ENCODE measurements at regions of chr17 and their contacts with region 1.

Region 1: GRCh38 chr17:72510397-72511016 is 389.7 kb downstream of the SOX9 start:
- DNase-seq: peak; percentile 92
- ATAC-seq: peak; percentile 80
- H3K4me3 ChIP-seq: no peak overlapping the region
- H3K27ac ChIP-seq: no peak overlapping the region
- H3K4me1 ChIP-seq: peaks cover 15% of the 10 kb centered on the region
- H3K27me3 ChIP-seq: no peaks in the 10 kb centered on the region
- CTCF ChIP-seq: no peak
- EP300 ChIP-seq: peak in 1 of 2 experiments; percentile 69; a peak in 1 of 4 replicates
- POLR2A ChIP-seq: no peak
- RAD21 ChIP-seq: no peak

Region 2: DNA sequence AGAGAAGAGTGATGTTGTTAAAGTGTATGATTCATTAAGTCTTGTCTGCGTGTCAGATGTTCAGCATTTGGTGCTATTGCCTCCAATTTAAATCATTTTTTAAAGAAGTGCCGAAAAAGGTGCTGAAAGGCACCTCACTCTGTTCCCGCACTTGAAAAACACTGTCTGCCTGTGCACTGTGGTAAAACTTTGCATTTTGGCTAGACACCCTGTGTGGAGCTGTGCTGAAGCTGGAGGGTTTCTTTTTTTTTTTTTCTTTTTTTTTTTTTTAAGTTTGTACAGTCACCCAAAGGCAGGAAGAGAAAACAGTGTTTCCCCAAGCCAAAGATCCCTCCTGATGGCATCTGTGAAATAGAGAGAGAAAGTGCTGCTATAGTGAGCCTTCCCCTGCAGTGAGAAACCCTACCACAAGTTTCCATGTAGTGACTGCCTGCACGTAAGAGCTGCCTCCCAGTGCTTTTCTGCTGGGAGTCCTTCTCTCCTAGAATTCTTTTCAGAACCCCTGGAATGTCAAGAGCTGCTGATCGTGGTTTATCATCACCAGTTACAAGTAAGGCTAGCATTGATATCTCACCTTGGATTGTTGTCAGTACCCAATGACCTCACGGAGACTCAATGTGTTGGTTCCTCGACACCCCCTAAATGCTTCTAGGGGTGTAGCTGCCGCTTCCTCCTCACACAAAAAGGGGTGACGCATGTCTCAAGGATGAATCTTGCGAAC is 505.7 kb before region 1 on chr17:
- CTCF ChIA-PET with region 1: no interaction called
- POLR2A ChIA-PET with region 1: interaction called, 4 read pairs
- RAD21 ChIA-PET with region 1: interaction called, 4 read pairs
- SMC1A ChIA-PET with region 1: interaction called, 3 read pairs
- in situ Hi-C with region 1: no loop called
- intact Hi-C with region 1: loop called (anchors 5 kb)
- DNase-seq: peak; percentile 79
- ATAC-seq: peak; percentile 77
- H3K4me3 ChIP-seq: peak overlapping the region; percentile 35
- H3K27ac ChIP-seq: peak overlapping the region; percentile 87
- H3K4me1 ChIP-seq: peaks cover 7% of the 10 kb centered on the region; the same call in 1 of the 2 replicates
- H3K27me3 ChIP-seq: no peaks in the 10 kb centered on the region
- CTCF ChIP-seq: no peak
- EP300 ChIP-seq: peak in 1 of 2 experiments; percentile 11; a peak in 2 of 4 replicates
- POLR2A ChIP-seq: no peak
- RAD21 ChIP-seq: peak; percentile 10; the same call in 1 of the 2 replicates

Region 3: GRCh38 chr17:72030067-72030899 is 480.2 kb before region 1 on chr17:
- CTCF ChIA-PET with region 1: interaction called, 3 read pairs
- POLR2A ChIA-PET with region 1: no interaction called
- RAD21 ChIA-PET with region 1: interaction called, 6 read pairs
- SMC1A ChIA-PET with region 1: interaction called, 6 read pairs
- in situ Hi-C with region 1: loop called (anchors 5 kb)
- intact Hi-C with region 1: loop called (anchors 2 kb)
- DNase-seq: peak; percentile 71
- ATAC-seq: peak; percentile 81
- H3K4me3 ChIP-seq: peak overlapping the region; percentile 80
- H3K27ac ChIP-seq: peak overlapping the region; percentile 91
- H3K4me1 ChIP-seq: peaks cover 45% of the 10 kb centered on the region
- H3K27me3 ChIP-seq: no peaks in the 10 kb centered on the region
- CTCF ChIP-seq: peak; percentile 30 to 48 (median 40); a peak in 4 of 6 replicates
- EP300 ChIP-seq: 0 out of 4 replicates have a peak, but pooled peaks of 1 of the 2 experiments have one; percentile 4
- POLR2A ChIP-seq: peak; percentile 65
- RAD21 ChIP-seq: peak; percentile 25; the same call in 1 of the 2 replicates

Region 4: GRCh38 chr17:72388765-72389473 is 121.6 kb before region 1 on chr17:
- CTCF ChIA-PET with region 1: interaction called, 5 read pairs
- POLR2A ChIA-PET with region 1: no interaction called
- RAD21 ChIA-PET with region 1: interaction called, 10 read pairs
- SMC1A ChIA-PET with region 1: interaction called, 14 read pairs
- in situ Hi-C with region 1: no loop called
- intact Hi-C with region 1: no loop called
- DNase-seq: peak; percentile 93
- ATAC-seq: peak; percentile 77
- H3K4me3 ChIP-seq: no peak overlapping the region
- H3K27ac ChIP-seq: 0 out of 2 replicates have a peak overlapping the region, but pooled peaks have one; percentile 14
- H3K4me1 ChIP-seq: peaks cover 40% of the 10 kb centered on the region
- H3K27me3 ChIP-seq: no peaks in the 10 kb centered on the region
- CTCF ChIP-seq: peak; percentile 41 to 64 (median 47); a peak in 5 of 6 replicates
- EP300 ChIP-seq: peak in 1 of 2 experiments; percentile 62; a peak in 1 of 4 replicates
- POLR2A ChIP-seq: no peak
- RAD21 ChIP-seq: peak; percentile 55; the same call in 1 of the 2 replicates

Region 5: GRCh38 chr17:72479113-72479512 is 31.4 kb before region 1 on chr17:
- CTCF ChIA-PET with region 1: interaction called, 10 read pairs
- POLR2A ChIA-PET with region 1: interaction called, 6 read pairs
- RAD21 ChIA-PET with region 1: interaction called, 11 read pairs
- SMC1A ChIA-PET with region 1: interaction called, 12 read pairs
- in situ Hi-C with region 1: no loop called
- intact Hi-C with region 1: loop called (anchors 1 kb)
- DNase-seq: no peak
- ATAC-seq: peak; percentile 64
- H3K4me3 ChIP-seq: no peak overlapping the region
- H3K27ac ChIP-seq: no peak overlapping the region
- H3K4me1 ChIP-seq: no peaks in the 10 kb centered on the region
- H3K27me3 ChIP-seq: no peaks in the 10 kb centered on the region
- CTCF ChIP-seq: peak; percentile 16 to 30 (median 16); a peak in 3 of 6 replicates
- EP300 ChIP-seq: no peak
- POLR2A ChIP-seq: no peak
- RAD21 ChIP-seq: peak; percentile 47; the same call in 1 of the 2 replicates

Region 6: DNA sequence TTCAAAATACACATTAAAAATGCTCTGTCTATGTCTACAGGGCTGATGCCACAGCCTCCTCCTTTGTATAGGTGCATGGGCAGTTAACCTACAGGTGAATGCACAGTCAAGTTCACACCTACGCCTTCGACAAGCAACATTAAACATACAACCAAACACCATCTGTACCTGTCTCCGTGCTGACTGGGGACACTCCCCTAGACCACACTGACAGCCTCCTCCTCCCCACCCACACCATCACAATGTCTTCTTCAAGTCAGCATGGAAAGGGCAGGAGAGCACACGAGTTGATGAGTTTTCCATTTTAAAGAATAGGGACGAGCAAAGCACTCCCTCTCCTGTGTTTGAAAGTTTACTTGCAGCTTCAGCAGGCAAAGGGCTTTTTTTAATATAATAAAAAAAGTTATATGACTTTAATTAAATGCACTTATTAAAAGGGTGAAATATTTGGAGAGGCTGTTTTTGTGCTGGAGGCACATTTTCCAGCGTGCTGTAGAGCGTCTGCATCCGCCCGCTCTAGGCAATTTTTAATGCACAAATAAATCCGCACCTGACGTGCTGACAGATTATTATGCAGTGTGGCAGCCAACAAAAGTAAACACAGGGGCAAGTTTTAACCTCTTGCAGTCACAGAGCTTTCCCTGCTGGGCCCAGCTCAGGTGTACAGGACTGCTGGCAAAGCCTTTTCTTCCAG is 21.8 kb before region 1 on chr17:
- CTCF ChIA-PET with region 1: interaction called, 4 read pairs
- POLR2A ChIA-PET with region 1: interaction called, 4 read pairs
- RAD21 ChIA-PET with region 1: interaction called, 33 read pairs
- SMC1A ChIA-PET with region 1: interaction called, 19 read pairs
- in situ Hi-C with region 1: no loop called
- intact Hi-C with region 1: no loop called
- DNase-seq: no peak
- ATAC-seq: no peak
- H3K4me3 ChIP-seq: no peak overlapping the region
- H3K27ac ChIP-seq: no peak overlapping the region
- H3K4me1 ChIP-seq: no peaks in the 10 kb centered on the region
- H3K27me3 ChIP-seq: no peaks in the 10 kb centered on the region
- CTCF ChIP-seq: no peak
- EP300 ChIP-seq: no peak
- POLR2A ChIP-seq: no peak
- RAD21 ChIP-seq: no peak

Region 7: GRCh38 chr17:72498364-72499210 is 11.9 kb before region 1 on chr17:
- CTCF ChIA-PET with region 1: interaction called, 4 read pairs
- POLR2A ChIA-PET with region 1: interaction called, 40 read pairs
- RAD21 ChIA-PET with region 1: interaction called, 12 read pairs
- SMC1A ChIA-PET with region 1: interaction called, 37 read pairs
- in situ Hi-C with region 1: no loop called
- intact Hi-C with region 1: no loop called
- DNase-seq: no peak
- ATAC-seq: peak; percentile 69
- H3K4me3 ChIP-seq: no peak overlapping the region
- H3K27ac ChIP-seq: no peak overlapping the region
- H3K4me1 ChIP-seq: no peaks in the 10 kb centered on the region; the same call in 1 of the 2 replicates
- H3K27me3 ChIP-seq: no peaks in the 10 kb centered on the region
- CTCF ChIP-seq: no peak
- EP300 ChIP-seq: no peak
- POLR2A ChIP-seq: no peak
- RAD21 ChIP-seq: no peak

Region 8: DNA sequence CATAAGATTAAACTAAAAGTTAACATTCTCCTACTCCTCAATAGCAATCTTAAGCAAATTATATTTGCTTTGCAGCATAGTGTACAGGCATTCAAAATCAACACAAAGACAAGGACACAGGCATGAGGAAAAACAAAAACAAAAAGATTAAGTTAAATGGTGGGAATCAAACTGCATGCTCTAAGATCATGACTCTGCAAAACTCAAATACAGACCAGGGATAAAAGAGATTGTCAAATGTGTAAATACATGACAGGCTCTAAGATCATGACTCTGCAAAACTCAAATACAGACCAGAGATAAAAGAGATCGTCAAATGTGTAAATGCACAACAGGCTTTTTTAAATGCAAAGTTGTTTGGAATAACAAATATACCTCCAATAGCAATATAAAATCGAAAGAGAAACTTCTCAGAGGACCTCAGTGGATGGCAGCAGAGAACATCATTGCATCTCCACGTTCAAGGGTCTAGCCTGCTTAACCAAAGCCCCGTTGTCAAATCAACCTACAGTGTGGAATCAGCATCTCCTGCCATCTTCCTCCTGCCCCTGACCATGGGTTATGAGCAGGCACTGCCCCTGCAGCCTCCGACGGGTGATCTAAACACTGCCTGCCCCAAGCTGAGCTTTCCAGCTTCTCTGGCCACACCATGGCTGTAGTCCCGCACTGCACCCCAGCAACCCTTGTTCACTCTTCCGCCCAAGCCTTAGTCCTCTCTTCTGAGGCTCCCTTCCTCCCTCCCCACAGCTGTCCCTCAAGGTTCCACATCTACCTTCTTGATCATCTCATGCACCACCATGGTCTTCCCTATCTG is 56.4 kb after region 1 on chr17:
- CTCF ChIA-PET with region 1: no interaction called
- POLR2A ChIA-PET with region 1: no interaction called
- RAD21 ChIA-PET with region 1: no interaction called
- SMC1A ChIA-PET with region 1: no interaction called
- in situ Hi-C with region 1: no loop called
- intact Hi-C with region 1: no loop called
- DNase-seq: no peak
- ATAC-seq: peak; percentile 29
- H3K4me3 ChIP-seq: no peak overlapping the region
- H3K27ac ChIP-seq: no peak overlapping the region
- H3K4me1 ChIP-seq: no peaks in the 10 kb centered on the region
- H3K27me3 ChIP-seq: no peaks in the 10 kb centered on the region
- CTCF ChIP-seq: no peak
- EP300 ChIP-seq: no peak
- POLR2A ChIP-seq: no peak
- RAD21 ChIP-seq: no peak

Region 9: GRCh38 chr17:72913142-72913682 is 402.7 kb after region 1 on chr17:
- CTCF ChIA-PET with region 1: no interaction called
- POLR2A ChIA-PET with region 1: no interaction called
- RAD21 ChIA-PET with region 1: no interaction called
- SMC1A ChIA-PET with region 1: no interaction called
- in situ Hi-C with region 1: no loop called
- intact Hi-C with region 1: no loop called
- DNase-seq: no peak
- ATAC-seq: no peak
- H3K4me3 ChIP-seq: no peak overlapping the region
- H3K27ac ChIP-seq: no peak overlapping the region
- H3K4me1 ChIP-seq: no peaks in the 10 kb centered on the region
- H3K27me3 ChIP-seq: no peaks in the 10 kb centered on the region
- CTCF ChIP-seq: no peak
- EP300 ChIP-seq: no peak
- POLR2A ChIP-seq: no peak
- RAD21 ChIP-seq: no peak

Measured in GM12878 (cell line).